ENCODE measurements at regions of chr6 and their contacts with region 1.

Region 1: DNA sequence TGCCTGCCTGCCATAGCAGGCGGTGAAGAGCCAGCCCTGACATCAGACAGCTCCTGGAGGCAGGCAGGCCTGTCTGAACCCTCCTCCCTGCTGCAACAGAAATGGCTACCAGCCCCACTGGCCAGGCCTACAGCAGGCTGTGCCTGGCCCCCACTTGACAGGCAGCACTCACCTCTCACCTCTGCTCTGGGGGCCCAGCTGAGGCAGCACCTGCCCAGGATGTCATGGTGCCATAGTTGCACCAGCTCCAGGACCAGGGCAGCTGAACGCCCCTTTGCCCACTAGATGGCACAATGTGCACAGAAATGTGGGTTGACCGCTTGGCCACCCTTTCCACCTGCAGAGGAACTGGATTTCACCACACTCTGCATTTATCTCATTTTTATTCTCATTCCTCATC is 30.6 kb downstream of the MRPL14 start:
- DNase-seq: no peak
- H3K4me3 ChIP-seq: no peak overlapping the region
- H3K27me3 ChIP-seq: no peaks in the 10 kb centered on the region
- CTCF ChIP-seq: peak; percentile 80

Region 2: GRCh38 chr6:43891072-43891870 is 205.3 kb before region 1 on chr6:
- CTCF ChIA-PET with region 1: no interaction called
- POLR2A ChIA-PET with region 1: no interaction called
- DNase-seq: no peak
- H3K4me3 ChIP-seq: no peak overlapping the region
- H3K27me3 ChIP-seq: peaks cover 3% of the 10 kb centered on the region; the same call in 1 of the 2 replicates
- CTCF ChIP-seq: no peak

Region 3: GRCh38 chr6:44111434-44112417 is 15.1 kb after region 1 on chr6:
- CTCF ChIA-PET with region 1: interaction called, 31 read pairs
- POLR2A ChIA-PET with region 1: no interaction called
- DNase-seq: no peak
- H3K4me3 ChIP-seq: no peak overlapping the region
- H3K27me3 ChIP-seq: no peaks in the 10 kb centered on the region
- CTCF ChIP-seq: no peak

Region 4: DNA sequence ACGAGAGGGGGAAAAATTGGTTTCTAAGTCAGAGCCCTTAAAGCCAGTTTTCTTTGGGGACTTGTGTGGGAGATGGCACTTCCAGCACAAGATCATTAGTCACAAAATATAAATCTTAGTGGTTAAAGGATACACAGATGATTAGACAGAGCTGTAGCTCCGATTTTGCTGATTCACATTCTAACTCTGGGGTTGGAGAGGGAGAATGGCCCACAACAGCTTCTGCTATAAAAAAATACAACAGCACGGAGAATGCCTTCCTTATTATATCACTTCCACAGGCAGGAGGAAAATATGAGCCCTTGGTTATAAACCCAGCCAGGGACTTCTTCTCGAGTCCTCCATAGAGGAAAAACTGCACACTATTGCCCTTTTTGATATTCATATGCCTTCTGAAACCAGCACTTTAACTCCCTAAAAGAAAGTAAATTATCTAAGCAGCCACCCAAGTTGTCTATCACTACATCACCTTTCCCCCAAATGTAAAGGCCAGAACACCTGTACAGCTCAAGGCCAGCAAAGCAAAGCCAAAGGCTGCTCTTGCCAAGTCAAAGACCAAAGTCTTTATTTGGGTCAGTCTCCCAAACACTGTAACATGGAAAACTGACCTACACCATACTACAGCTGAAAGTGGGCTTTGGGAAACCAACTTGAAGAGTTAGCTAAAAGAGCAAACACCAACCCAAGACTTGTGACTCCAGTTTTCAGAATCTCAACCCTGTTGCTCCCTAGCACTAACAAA is 20.2 kb after region 1 on chr6:
- CTCF ChIA-PET with region 1: interaction called, 31 read pairs
- POLR2A ChIA-PET with region 1: no interaction called
- DNase-seq: peak; percentile 94
- H3K4me3 ChIP-seq: no peak overlapping the region
- H3K27me3 ChIP-seq: no peaks in the 10 kb centered on the region
- CTCF ChIP-seq: no peak

Region 5: GRCh38 chr6:44133003-44133931 is 36.7 kb after region 1 on chr6:
- CTCF ChIA-PET with region 1: interaction called, 12 read pairs
- POLR2A ChIA-PET with region 1: no interaction called
- DNase-seq: no peak
- H3K4me3 ChIP-seq: no peak overlapping the region
- H3K27me3 ChIP-seq: no peaks in the 10 kb centered on the region
- CTCF ChIP-seq: peak; percentile 19; the same call in 1 of the 2 replicates

Region 6: DNA sequence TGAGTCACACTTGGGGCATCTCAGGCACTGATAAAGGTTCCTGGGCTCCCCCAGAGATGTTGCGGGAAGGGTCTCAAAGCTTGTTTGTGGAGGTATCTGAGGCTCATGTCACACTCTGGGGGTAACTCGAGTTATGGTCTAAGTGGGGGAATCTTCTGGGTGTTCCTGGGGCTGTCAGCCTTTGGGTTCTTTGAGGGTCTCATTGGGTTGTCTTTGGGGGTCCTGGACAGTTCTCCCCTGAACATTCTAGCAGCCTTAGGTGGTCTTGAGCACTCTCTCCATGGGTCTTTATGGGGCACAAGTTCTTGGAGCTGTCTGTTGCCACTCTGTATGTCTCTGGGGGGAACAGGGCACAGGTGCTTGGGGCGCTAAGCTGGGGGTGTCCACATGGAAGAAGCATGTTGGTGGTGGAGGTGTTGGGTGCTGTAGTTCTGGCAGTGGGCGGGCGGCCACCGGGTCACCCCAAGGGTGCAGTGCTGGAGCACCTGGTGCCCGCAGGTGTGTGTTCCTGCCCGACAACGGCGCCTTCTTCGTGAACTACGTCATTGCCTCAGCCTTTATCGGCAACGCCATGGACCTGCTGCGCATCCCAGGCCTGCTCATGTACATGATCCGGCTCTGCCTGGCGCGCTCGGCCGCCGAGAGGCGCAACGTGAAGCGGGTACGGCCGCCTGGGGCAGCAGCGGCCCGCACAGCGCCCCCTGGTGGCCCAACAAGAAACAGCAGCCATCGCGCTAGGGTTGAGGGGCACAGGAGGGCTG is 54.9 kb after region 1 on chr6:
- CTCF ChIA-PET with region 1: interaction called, 81 read pairs
- POLR2A ChIA-PET with region 1: no interaction called
- DNase-seq: no peak
- H3K4me3 ChIP-seq: no peak overlapping the region
- H3K27me3 ChIP-seq: no peaks in the 10 kb centered on the region
- CTCF ChIP-seq: peak; percentile 91

Region 7: DNA sequence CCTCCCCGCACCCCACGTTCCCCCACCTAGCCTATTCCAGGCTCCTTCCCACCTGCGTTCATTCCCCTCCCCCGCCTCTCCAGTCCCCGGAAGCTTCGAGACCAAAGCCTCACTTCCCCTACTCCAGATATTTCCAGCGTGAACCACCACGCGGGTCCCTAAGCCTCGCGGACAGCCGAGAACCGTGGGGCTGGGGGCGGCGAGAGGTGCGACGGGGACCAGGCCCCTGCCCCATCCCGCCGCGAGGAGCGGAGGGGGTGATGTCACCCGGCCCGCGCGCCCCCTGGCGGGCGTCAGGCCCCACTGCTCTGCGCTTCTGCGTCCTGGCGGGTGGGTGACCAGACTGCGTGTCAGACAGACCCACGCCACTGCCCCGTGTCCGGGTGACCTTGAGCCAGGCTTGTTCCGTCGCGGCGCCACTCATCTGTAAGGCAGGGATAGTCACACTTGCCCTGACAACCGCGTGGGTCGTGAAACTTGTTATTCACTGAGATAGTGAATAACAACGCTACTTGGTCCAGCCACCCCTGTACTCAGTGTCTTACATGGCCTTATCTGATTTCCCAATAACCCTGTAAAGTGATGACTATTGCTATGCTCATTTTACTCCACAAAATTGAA is 141.3 kb after region 1 on chr6:
- CTCF ChIA-PET with region 1: interaction called, 10 read pairs
- POLR2A ChIA-PET with region 1: no interaction called
- DNase-seq: no peak
- H3K4me3 ChIP-seq: peak overlapping the region; percentile 53
- H3K27me3 ChIP-seq: no peaks in the 10 kb centered on the region
- CTCF ChIP-seq: peak; percentile 88